ENCODE measurements at regions of chr11 and their contacts with region 1.

Region 1: DNA sequence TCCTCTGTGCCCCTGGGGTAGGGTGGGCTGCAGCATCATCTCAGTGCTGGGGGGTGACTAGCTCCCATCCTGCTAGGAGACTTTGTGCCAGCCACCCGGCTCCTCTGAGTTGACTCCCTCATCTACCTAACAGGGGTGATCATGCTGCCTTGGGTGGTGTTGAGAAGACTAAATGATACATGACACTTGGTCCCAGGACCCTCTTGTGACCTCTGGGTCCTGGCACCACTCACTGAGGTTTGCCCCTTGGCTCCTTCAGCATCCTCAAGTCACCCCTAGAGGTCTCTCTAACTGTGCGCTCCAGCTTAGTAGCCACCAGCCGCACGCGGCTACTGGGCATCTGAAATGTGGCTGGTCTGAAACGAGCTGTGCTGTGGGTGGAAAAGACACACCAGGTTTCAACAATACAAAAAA is 72.1 kb downstream of the LRRC32 start:
- DNase-seq: peak; percentile 33 to 51
- ATAC-seq: peak; percentile 40 to 76 (median 68)
- H3K4me3 ChIP-seq: no peak overlapping the region
- H3K27ac ChIP-seq: peak overlapping the region in 6 of 10 donors; percentile 18 to 60 (median 45)
- H3K4me1 ChIP-seq: peaks cover 0 to 35% (median 27%) of the 10 kb centered on the region in 9 donors
- H3K27me3 ChIP-seq: no peaks in the 10 kb centered on the region
- CTCF ChIP-seq: peak; percentile 24 to 77 (median 63)

Region 2: GRCh38 chr11:76551400-76551799 is 47.0 kb before region 1 on chr11:
- intact Hi-C with region 1: loop called in 1 of 10 experiments (anchors 2 kb)
- DNase-seq: no peak
- ATAC-seq: peak in 1 of 8 donors; percentile 52
- H3K4me3 ChIP-seq: no peak overlapping the region
- H3K27ac ChIP-seq: no peak overlapping the region
- H3K4me1 ChIP-seq: peaks cover 0 to 20% (median 0%) of the 10 kb centered on the region in 9 donors
- H3K27me3 ChIP-seq: no peaks in the 10 kb centered on the region
- CTCF ChIP-seq: peak in 7 of 9 donors; percentile 37 to 67 (median 53)

Region 3: DNA sequence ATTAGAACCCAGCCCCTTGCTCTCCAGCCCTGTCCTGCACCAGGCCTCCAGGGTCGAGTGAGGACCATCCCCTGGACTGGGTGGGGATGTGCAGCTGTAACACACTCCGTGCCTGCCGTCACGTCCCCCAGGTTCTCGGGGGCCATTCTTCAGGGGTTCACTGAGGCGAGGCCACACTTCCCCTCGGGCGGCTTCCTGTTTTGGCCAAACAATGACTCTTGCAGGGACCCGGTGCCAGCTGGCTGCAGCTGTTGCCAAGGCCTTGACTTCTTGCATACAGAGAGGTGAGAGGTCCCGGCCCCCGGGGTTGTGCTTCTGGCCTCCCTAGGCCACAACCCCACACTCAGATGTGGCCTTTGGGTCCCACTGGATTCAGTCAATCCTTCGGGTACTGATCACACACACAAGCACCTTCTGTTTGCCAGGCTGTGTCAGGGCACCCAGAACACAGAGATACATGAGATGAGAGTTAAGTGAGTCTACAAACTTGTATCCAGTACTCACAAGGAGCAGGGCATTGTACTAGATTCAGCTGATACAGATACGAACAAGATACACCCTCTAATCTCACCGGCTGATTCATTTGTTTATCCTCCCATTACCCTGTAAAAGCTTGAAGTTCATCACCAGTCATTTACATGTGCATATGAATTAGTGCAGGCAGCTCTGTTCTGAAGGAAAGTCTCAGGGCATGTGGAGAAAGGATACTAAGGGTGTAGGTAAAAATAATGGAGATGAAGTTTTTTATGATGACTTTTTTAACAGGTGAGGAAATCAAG is 39.2 kb after region 1 on chr11:
- intact Hi-C with region 1: loop called in 1 of 10 experiments (anchors 5 kb)
- DNase-seq: peak; percentile 76 to 83
- ATAC-seq: peak; percentile 64 to 87 (median 78)
- H3K4me3 ChIP-seq: no peak overlapping the region
- H3K27ac ChIP-seq: peak overlapping the region; percentile 36 to 80 (median 64)
- H3K4me1 ChIP-seq: peaks cover 4 to 46% (median 28%) of the 10 kb centered on the region in 9 donors
- H3K27me3 ChIP-seq: no peaks in the 10 kb centered on the region
- CTCF ChIP-seq: no peak

Region 4: DNA sequence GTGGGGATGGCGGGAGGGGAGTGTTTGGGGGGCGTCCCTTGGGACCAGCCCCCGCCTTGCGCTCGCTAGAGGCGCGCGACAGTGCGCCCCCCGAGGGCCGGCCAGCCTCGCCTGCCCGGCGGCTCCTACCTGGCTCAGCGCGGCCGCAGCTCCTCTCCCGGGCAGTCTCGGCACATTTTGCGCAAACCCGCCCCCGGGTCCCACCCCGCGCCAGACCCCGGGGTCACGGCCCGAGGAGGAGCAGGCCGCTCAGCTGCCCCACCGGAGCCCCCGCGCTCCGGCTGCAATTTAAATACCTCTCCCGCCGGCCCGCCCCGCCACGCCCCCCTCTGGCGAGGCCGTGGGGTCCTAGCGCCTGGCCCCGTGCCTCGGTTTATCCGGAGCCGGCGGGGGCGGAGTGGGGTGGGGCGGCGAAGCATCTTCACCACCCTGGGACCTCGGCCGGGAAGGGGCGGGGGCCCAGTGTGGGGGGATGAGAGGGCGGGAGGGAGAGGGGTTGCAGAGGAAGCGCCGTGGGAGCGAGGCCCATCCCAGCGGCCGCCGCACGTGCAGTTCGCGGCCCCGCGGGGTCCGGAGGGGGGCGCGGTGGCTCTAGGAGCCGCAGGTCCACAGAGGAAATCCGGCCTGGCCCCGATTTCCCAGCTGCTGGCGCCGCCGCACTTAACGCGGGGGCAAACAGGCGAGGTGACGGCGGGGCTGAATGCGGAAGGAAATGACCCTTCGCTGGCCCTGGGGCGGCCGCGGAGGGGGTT is 72.2 kb after region 1 on chr11 and contains the start of gene LRRC32:
- intact Hi-C with region 1: loop called in 5 of 10 experiments (anchors 5 kb)
- DNase-seq: peak; percentile 79 to 84
- ATAC-seq: peak; percentile 54 to 78 (median 70)
- H3K4me3 ChIP-seq: peak within 1 kb of the TSS; percentile 47 to 87 (median 74)
- H3K27ac ChIP-seq: peak within 1 kb of the TSS; percentile 83 to 96 (median 90)
- H3K4me1 ChIP-seq: peaks cover 18 to 80% (median 55%) of the 10 kb centered on the region in 9 donors
- H3K27me3 ChIP-seq: peaks cover 0 to 36% (median 0%) of the 10 kb centered on the region in 7 donors
- CTCF ChIP-seq: peak in 4 of 9 donors; percentile 7 to 25 (median 8)
- total RNA-seq, gene LRRC32: 16.7 to 61.3 (median 31.5) TPM

Region 5: DNA sequence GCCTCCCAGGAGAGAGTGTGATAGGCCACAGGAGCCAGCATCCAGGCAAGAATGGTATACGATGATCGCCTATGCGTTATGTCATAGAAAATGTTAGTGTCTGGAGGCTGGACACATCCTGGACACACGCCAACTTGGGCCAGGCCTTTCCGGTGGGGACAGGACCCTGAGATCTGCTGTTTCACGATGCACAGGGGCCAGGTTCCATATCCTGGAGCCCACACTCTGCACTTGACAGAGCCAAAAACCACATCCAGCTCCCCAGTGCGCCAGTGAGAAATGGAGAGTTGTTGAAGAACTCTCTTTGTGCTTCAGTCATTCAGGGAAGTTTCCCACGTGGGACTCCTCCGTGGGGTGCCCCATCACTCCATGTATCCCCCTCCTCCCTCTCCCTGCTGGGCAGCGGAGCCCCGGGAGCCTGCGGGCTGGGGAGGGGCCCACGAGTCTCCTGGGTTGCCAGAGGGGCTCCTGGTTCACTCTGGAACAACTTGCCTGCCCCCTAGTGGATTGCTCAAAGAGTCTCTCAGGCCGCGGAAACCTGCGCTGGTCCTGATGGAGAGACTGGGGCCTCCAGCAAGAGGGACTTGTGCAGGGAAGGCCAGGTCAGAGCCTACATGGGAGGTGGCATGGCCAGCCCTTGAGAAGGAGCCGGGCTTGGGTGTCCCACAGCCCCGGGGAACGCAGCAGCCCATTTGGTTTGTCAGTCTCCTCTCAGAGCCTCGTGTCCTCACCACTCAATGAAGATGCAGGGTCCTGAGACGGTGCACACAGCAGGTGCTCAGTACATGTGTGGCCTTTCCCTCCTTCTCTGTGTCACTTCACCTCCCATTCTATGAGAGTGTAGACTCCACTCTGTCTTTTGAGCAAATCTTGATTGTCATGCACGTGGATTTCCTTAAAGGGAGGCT is 82.3 kb after region 1 on chr11:
- intact Hi-C with region 1: loop called in 9 of 10 experiments (anchors 1 to 5 kb)
- DNase-seq: peak; percentile 66 to 87
- ATAC-seq: peak; percentile 79 to 91 (median 84)
- H3K4me3 ChIP-seq: no peak overlapping the region
- H3K27ac ChIP-seq: peak overlapping the region in 1 of 10 donors; percentile 5
- H3K4me1 ChIP-seq: peaks cover 0 to 21% (median 9%) of the 10 kb centered on the region in 9 donors
- H3K27me3 ChIP-seq: no peaks in the 10 kb centered on the region
- CTCF ChIP-seq: peak; percentile 78 to 96 (median 90)

Region 6: DNA sequence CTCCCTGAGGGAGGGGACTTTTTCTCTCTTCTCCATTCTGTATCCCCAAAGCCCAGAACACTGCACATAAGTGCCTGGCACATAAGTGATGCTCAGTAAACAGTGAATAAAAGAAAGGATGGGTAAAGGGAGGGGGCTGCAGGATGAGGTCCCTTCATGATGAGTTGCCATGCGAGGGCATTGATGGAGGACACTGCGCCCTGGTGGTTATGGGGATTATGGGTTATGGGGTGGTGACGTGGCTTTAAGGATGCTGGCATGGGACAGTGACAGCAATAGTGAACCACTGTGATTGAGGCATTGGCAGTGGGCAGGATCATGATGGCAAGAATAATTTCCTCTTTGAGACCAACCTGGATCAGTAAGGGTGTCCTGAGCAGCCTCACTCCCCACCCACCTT is 116.1 kb after region 1 on chr11:
- intact Hi-C with region 1: no loop called
- DNase-seq: no peak
- ATAC-seq: no peak
- H3K4me3 ChIP-seq: no peak overlapping the region
- H3K27ac ChIP-seq: no peak overlapping the region
- H3K4me1 ChIP-seq: no peaks in the 10 kb centered on the region
- H3K27me3 ChIP-seq: no peaks in the 10 kb centered on the region
- CTCF ChIP-seq: no peak

Measured in heart right ventricle (tissue), 16 donors.